T-cell (primary cell): ENCODE measurements at regions of chr15 and their contacts with region 1.

Region 1: GRCh38 chr15:50315814-50316630 is 39.0 kb downstream of the GABPB1 start:
- DNase-seq: peak in 2 of 35 experiments; percentile 5 to 68
- ATAC-seq: peak in 2 of 4 experiments; percentile 48 to 52
- H3K4me3 ChIP-seq: no peak overlapping the region
- H3K4me3 Mint-ChIP-seq: no peak overlapping the region
- H3K27ac ChIP-seq: no peak overlapping the region
- H3K27ac Mint-ChIP-seq: no peak overlapping the region
- H3K4me1 ChIP-seq: peaks cover 0 to 7% of the 10 kb centered on the region in 2 experiments
- H3K4me1 Mint-ChIP-seq: peaks cover 14 to 21% (median 16%) of the 10 kb centered on the region in 3 donors
- H3K27me3 ChIP-seq: no peaks in the 10 kb centered on the region
- H3K27me3 Mint-ChIP-seq: no peaks in the 10 kb centered on the region

Region 2: GRCh38 chr15:50182219-50183013 is 133.6 kb before region 1 on chr15:
- CTCF ChIA-PET with region 1: interaction called in 1 of 2 experiments, 14 read pairs
- POLR2A ChIA-PET with region 1: no interaction called
- DNase-seq: peak in 29 of 35 experiments; percentile 5 to 59 (median 23)
- ATAC-seq: peak; percentile 68 to 76 (median 70)
- H3K4me3 ChIP-seq: peak overlapping the region; percentile 52 to 79
- H3K4me3 Mint-ChIP-seq: peak overlapping the region; percentile 82 to 97 (median 86)
- H3K27ac ChIP-seq: no peak overlapping the region
- H3K27ac Mint-ChIP-seq: no peak overlapping the region
- H3K4me1 ChIP-seq: peaks cover 0 to 14% of the 10 kb centered on the region in 2 experiments
- H3K4me1 Mint-ChIP-seq: peaks cover 15 to 18% (median 18%) of the 10 kb centered on the region in 3 donors
- H3K27me3 ChIP-seq: peaks cover 0 to 18% of the 10 kb centered on the region in 2 experiments
- H3K27me3 Mint-ChIP-seq: peaks cover 29 to 35% of the 10 kb centered on the region in 2 donors